Activated CD4-positive, alpha-beta memory T cell treated with anti-CD3 and anti-CD28 coated beads for 36 hours (primary cell): ENCODE measurements at regions of chr14 and their contacts with region 1.

Region 1: GRCh38 chr14:103385152-103385993 is at the start of gene MARK3:
- DNase-seq: peak; percentile 98
- H3K4me3 Mint-ChIP-seq: peak within 1 kb of the TSS; percentile 98
- H3K27ac Mint-ChIP-seq: peak within 1 kb of the TSS; percentile 94
- H3K4me1 Mint-ChIP-seq: peaks cover 38% of the 10 kb centered on the region
- H3K27me3 Mint-ChIP-seq: peaks cover 3% of the 10 kb centered on the region
- total RNA-seq, gene MARK3: 63.4 to 69.1 TPM

Region 2: DNA sequence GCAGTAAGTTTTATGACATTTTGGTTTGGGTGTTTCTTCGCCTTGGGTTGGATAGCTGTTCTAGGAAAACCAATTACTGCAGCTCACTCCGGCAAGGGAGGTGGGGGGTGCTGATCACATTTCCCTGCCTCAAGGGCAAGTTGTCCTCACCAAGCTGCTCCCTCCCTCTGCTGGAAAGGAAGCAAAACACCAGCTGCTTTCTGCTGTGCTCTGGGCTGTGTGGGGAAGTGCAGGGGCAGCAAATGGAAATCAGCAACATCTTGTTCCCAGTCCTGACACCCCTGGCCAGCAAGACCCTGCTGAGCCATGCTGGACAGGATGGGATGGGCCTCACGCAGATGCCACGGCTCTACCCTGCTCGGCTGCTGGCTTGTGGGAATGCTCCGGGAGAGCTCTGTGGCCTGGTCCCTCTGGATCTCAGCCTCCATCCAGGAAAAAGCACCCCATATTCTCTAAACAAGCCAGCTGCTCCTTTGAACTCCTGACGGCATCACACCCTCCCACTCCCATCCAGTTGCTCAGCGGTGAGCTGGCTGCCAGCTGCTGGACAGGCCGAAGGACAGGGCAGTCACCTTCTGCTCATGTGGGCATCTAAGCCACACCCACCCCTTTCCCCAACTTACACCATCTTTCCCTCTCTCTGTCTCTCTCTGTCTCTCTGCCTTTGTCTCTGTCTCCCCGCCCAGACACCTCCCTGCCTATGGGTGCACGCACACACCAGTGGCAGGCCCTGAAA is 103.7 kb before region 1 on chr14:
- CTCF ChIA-PET with region 1: no interaction called
- POLR2A ChIA-PET with region 1: no interaction called
- intact Hi-C with region 1: no loop called
- DNase-seq: no peak
- H3K4me3 Mint-ChIP-seq: no peak overlapping the region
- H3K27ac Mint-ChIP-seq: no peak overlapping the region
- H3K4me1 Mint-ChIP-seq: peaks cover 13% of the 10 kb centered on the region
- H3K27me3 Mint-ChIP-seq: peaks cover 62% of the 10 kb centered on the region

Region 3: DNA sequence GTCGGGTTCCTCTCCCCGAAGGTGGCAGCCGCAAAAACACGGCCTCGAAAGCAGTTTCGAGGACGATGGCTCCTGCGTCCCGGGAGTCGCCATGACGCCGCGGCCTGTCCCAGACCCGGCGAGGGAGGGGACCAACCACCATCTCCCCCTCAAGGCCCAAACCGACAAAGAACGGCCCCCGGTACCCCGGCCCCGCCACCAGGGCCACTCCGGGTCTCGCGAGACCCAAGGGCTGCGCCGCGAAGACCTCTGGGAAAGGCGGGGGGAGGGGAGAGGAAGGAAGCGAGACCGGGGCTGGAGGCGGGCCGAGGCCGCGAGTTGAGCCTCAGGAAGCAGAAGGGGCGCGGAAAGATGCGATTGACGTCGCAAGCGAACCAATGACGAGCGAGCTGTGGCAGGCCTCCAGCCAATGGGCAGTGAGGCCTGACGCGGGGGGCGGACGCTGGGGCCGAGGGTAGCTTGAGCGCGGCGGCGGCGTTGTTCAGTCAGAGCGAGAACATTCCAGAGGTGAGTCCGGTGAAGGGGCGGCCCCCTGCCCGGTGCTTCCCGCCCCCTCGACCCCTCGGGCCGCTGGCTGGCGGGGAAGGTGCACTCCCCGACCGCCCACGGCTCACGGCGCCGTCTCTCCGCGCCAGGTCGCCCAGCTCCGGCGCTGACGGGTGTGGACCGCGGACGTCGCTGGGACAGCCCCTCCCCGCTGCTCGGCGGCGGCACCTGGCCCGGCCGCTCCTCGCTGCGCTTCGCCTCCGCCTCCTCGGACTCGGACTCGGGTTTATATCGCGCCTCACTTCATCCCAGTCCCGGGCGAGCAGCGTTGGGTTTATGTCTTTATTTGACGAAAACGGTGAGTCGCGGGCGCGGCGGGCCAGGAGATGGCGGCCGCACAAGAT is 51.4 kb before region 1 on chr14 and contains the start of gene EIF5:
- CTCF ChIA-PET with region 1: interaction called, 12 read pairs
- POLR2A ChIA-PET with region 1: interaction called, 14 read pairs
- intact Hi-C with region 1: loop called (anchors 1 kb)
- DNase-seq: peak; percentile 99
- H3K4me3 Mint-ChIP-seq: peak within 1 kb of the TSS; percentile 88
- H3K27ac Mint-ChIP-seq: peak within 1 kb of the TSS; percentile 96
- H3K4me1 Mint-ChIP-seq: peaks cover 47% of the 10 kb centered on the region
- H3K27me3 Mint-ChIP-seq: peaks cover 1% of the 10 kb centered on the region
- total RNA-seq, gene EIF5: 192 to 196 TPM

Region 4: DNA sequence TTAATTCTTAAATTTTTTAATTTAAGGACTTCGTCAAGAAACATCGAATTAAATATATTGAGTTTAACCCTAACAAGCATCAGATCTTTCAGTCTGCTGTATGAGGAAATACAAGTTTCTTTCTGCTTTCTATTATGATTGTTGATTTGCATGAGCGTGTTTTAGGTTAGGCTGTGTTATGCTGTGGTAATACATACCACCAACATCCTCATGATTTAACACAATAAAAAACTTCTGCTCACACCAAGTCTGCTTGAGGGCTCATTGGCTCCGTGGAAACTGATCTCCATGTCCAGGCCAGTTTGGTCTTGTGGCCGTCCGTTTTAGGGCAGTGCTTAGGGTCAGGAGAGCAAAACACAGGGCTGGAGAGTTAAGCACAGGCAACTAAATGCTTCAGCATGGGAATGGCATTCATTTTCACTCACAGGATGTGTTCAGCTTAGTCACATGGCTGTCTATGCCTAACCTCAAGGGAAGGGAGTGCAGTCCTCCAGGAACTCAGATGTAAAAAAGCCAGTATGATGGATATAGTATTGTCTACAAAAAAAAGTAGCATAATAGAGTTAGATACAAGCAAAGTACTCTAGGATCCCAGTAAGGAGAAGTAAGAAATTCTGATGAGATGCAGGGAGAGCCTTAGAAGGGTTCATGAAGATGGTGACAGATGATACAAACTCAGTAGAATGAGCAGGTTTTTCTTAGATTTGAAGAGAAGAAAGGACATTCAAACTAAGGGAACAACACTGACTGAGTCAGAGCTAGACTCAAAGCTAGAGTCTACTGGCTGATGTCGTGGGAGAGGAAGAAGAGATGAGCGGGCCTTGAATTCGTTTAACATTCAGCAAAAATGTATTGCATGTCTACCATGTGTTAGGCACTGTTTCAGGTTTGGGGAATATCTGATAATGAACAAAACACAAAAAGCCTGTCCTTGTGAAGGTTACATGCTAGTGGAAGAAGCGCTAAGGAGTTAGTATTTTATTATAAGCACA is 16.1 kb after region 1 on chr14:
- CTCF ChIA-PET with region 1: interaction called, 49 read pairs
- POLR2A ChIA-PET with region 1: interaction called, 3 read pairs
- intact Hi-C with region 1: loop called (anchors 2 kb)
- DNase-seq: peak; percentile 32
- H3K4me3 Mint-ChIP-seq: no peak overlapping the region
- H3K27ac Mint-ChIP-seq: peak overlapping the region; percentile 83
- H3K4me1 Mint-ChIP-seq: peaks cover 60% of the 10 kb centered on the region
- H3K27me3 Mint-ChIP-seq: no peaks in the 10 kb centered on the region

Region 5: GRCh38 chr14:103427485-103428443 is 42.4 kb after region 1 on chr14:
- CTCF ChIA-PET with region 1: interaction called, 5 read pairs
- POLR2A ChIA-PET with region 1: no interaction called
- intact Hi-C with region 1: loop called (anchors 5 kb)
- DNase-seq: peak; percentile 62
- H3K4me3 Mint-ChIP-seq: no peak overlapping the region
- H3K27ac Mint-ChIP-seq: peak overlapping the region; percentile 70
- H3K4me1 Mint-ChIP-seq: peaks cover 56% of the 10 kb centered on the region
- H3K27me3 Mint-ChIP-seq: no peaks in the 10 kb centered on the region